A549 (cell line): ENCODE measurements at regions of chr12 and their contacts with region 1.

Region 1: DNA sequence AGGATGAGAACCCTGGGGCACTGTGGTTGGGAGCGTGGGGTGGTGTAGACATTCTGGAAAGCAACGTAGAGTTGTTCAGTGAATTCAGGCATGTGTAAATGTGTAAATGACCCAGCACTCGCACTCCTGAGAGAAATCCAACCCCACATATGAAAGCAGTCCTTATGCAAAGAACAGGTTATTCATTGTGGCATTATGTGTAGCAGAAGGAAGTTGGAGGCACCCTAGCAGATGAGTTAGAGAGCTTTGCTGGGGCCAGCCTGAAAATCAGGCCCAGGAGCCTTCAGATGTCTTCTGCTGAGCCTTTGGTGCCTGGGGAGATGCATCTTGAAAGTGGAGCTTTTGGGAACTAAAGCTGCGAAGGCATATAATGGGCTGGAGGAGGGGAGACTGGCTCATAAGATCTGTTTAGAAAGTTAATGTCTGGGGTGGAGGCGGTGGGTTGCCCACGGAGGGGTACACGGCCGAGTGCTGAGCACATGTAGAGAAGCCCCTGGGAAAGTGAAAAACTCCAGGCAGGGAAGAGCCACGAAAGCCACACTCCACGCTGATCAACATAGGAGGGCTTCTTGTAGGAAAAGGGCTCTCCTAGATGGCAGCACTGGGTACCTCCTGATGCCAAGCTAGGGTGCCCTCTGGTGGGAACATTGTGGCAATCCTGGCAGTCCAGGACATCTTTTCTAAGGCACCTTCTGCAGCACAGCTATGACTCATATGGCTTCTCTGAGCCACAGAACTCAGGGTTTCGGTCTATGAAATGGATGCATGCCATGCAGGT is 6.0 kb upstream of the KRT83 start:
- DNase-seq: peak; percentile 98 to 100
- ATAC-seq: peak; percentile 94 to 98
- H3K4me3 ChIP-seq: no peak overlapping the region
- H3K27ac ChIP-seq: peak overlapping the region; percentile 75 to 90
- H3K4me1 ChIP-seq: peaks cover 19% of the 10 kb centered on the region
- CTCF ChIP-seq: peak; percentile 100
- EP300 ChIP-seq: no peak; a peak in 1 of 5 replicates
- POLR2A ChIP-seq: no peak
- RAD21 ChIP-seq: peak; percentile 95 to 96

Region 2: DNA sequence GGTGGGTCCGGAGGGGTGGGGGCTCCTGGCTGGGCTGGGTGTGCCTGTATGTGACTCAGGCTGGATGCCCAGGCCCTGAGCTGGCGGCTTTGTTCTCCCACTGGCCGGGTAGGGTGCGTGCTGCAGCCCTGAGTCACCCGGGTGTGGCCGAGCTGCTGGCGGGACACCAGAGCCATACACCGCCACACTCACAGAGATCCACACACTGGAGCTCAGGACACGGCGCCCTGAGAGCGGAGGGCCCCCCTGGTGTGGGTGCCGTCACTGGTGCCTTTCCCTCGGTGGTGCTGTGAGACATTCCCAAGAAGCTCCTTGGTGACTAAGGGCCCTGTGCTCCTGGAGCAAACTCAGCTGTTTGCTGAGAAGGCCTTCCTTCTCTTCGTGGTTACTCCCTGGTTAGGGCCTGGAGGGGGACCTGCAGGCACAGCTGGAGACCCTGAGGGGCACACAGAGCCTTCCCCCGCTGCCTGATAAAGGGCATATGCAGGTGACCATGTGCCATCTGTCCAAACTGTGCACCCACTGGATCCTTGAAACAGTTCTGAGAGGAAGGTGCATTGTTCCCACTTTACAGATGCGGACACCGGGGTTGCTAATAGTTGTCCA is 179.8 kb before region 1 on chr12:
- CTCF ChIA-PET with region 1: interaction called, 58 read pairs
- POLR2A ChIA-PET with region 1: no interaction called
- DNase-seq: peak; percentile 96 to 100
- ATAC-seq: peak; percentile 46 to 71
- H3K4me3 ChIP-seq: no peak overlapping the region
- H3K27ac ChIP-seq: peak overlapping the region; percentile 100
- H3K4me1 ChIP-seq: peaks cover 93% of the 10 kb centered on the region
- CTCF ChIP-seq: no peak
- EP300 ChIP-seq: peak; percentile 97 to 99
- POLR2A ChIP-seq: no peak
- RAD21 ChIP-seq: peak in 1 of 2 experiments; percentile 42; a peak in 3 of 5 replicates

Region 3: DNA sequence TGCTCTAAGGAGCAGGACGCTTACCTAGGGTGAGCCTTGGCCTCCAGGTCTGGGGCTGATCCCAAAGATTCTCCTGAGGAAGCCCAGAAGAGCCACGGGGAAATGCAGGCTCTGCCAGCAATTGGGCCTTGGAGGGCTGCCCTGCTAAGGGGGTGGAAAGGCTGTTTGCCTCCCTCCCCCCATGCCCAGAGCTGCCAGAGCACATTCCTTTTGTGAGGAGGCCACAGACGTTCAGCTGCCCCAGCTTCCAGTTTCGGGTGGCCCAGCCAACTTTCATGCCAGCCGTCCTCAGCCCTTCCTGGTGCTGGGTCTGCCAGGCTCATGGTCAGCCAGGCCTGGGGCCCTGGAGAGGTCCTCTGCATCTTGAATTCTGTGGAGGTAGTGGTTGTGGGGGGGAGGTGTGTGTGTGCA is 78.2 kb before region 1 on chr12:
- CTCF ChIA-PET with region 1: interaction called, 61 read pairs
- POLR2A ChIA-PET with region 1: interaction called, 20 read pairs
- DNase-seq: peak in 1 of 2 experiments; percentile 71
- ATAC-seq: peak; percentile 0; a peak in 2 of 6 replicates
- H3K4me3 ChIP-seq: no peak overlapping the region
- H3K27ac ChIP-seq: peak overlapping the region; percentile 92 to 97
- H3K4me1 ChIP-seq: peaks cover 96% of the 10 kb centered on the region
- CTCF ChIP-seq: no peak
- EP300 ChIP-seq: no peak
- POLR2A ChIP-seq: no peak; the same call in 1 of the 2 replicates
- RAD21 ChIP-seq: 0 out of 5 replicates have a peak, but pooled peaks of 1 of the 2 experiments have one; percentile 2

Region 4: GRCh38 chr12:52278541-52279421 is 48.5 kb before region 1 on chr12:
- CTCF ChIA-PET with region 1: interaction called, 387 read pairs
- POLR2A ChIA-PET with region 1: interaction called, 49 read pairs
- DNase-seq: peak; percentile 87 to 92
- ATAC-seq: peak; percentile 31 to 49
- H3K4me3 ChIP-seq: peak overlapping the region; percentile 33; the same call in 2 of the 3 replicates
- H3K27ac ChIP-seq: peak overlapping the region; percentile 96 to 100
- H3K4me1 ChIP-seq: peaks cover 67% of the 10 kb centered on the region
- CTCF ChIP-seq: peak; percentile 96
- EP300 ChIP-seq: no peak
- POLR2A ChIP-seq: no peak
- RAD21 ChIP-seq: peak; percentile 85 to 89

Region 5: GRCh38 chr12:52313926-52314325 is 13.3 kb before region 1 on chr12:
- CTCF ChIA-PET with region 1: interaction called, 217 read pairs
- POLR2A ChIA-PET with region 1: interaction called, 3 read pairs
- DNase-seq: no peak
- ATAC-seq: no peak
- H3K4me3 ChIP-seq: no peak overlapping the region
- H3K27ac ChIP-seq: peak overlapping the region in 1 of 2 experiments; percentile 52; a peak in 3 of 6 replicates
- H3K4me1 ChIP-seq: peaks cover 5% of the 10 kb centered on the region; the same call in 1 of the 3 replicates
- CTCF ChIP-seq: no peak
- EP300 ChIP-seq: no peak
- POLR2A ChIP-seq: no peak
- RAD21 ChIP-seq: no peak

Region 6: DNA sequence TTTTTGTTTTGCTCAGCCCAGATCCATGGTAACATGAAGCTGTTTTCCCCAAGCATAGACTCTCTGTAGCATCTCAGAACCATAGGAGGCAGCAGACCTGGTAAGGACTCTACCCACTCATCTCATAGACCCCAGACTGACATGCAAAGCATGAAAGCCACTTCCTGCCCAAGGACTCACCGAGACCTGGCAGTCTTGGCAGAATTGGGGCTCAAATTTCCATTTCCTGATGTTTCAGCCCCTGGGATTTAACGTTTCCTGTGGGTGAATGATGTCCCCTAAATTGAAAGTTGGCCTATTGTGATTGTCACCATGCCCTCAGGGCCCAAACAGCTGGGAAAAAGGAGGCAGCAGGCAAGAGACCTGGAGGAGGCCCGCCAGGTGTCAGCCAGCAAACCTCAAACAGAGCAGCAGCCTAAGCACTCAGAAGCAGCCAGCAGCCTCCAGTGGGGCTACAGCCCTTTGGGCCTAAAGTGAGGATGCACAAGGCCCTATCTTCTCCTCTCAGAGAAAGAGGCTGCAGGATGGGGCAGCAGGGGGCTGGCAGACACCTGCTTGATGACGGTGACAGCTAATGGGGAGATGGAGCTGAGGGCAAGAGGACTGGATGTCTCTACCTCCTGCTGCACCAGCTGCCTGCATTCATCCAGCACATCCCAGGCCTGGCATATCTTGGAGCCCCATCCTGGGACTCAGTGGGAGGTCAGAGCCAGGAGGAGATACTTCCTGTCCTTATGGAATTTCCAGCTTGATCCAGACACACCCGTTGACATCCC is 31.5 kb after region 1 on chr12:
- CTCF ChIA-PET with region 1: interaction called, 10 read pairs
- POLR2A ChIA-PET with region 1: no interaction called
- DNase-seq: no peak
- ATAC-seq: no peak
- H3K4me3 ChIP-seq: no peak overlapping the region
- H3K27ac ChIP-seq: peak overlapping the region in 1 of 2 experiments; percentile 24; a peak in 1 of 6 replicates
- H3K4me1 ChIP-seq: 0 out of 3 replicates have a peak, but pooled peaks cover 3% of the 10 kb centered on the region
- CTCF ChIP-seq: no peak
- EP300 ChIP-seq: no peak
- POLR2A ChIP-seq: no peak
- RAD21 ChIP-seq: no peak

Region 7: GRCh38 chr12:52870351-52871290 is 543.4 kb after region 1 on chr12:
- CTCF ChIA-PET with region 1: interaction called, 11 read pairs
- POLR2A ChIA-PET with region 1: no interaction called
- DNase-seq: peak; percentile 83 to 86
- ATAC-seq: peak; percentile 33 to 71
- H3K4me3 ChIP-seq: no peak overlapping the region
- H3K27ac ChIP-seq: peak overlapping the region; percentile 94 to 97
- H3K4me1 ChIP-seq: peaks cover 80% of the 10 kb centered on the region
- CTCF ChIP-seq: peak; percentile 96
- EP300 ChIP-seq: no peak
- POLR2A ChIP-seq: no peak
- RAD21 ChIP-seq: peak; percentile 98 to 100